ENCODE measurements at regions of chr13 and their contacts with region 1.

Region 1: GRCh38 chr13:106536244-106537034 is 977 bp upstream of the EFNB2 start:
- DNase-seq: peak; percentile 93
- H3K4me3 ChIP-seq: peak overlapping the region; percentile 37 to 89 (median 82)
- H3K27ac ChIP-seq: peak overlapping the region; percentile 82 to 93 (median 89)
- H3K4me1 ChIP-seq: peaks cover 0 to 27% (median 17%) of the 10 kb centered on the region in 4 donors
- H3K27me3 ChIP-seq: no peaks in the 10 kb centered on the region
- CTCF ChIP-seq: peak; percentile 66 to 93 (median 90)
- EP300 ChIP-seq: no peak
- POLR2A ChIP-seq: no peak

Region 2: DNA sequence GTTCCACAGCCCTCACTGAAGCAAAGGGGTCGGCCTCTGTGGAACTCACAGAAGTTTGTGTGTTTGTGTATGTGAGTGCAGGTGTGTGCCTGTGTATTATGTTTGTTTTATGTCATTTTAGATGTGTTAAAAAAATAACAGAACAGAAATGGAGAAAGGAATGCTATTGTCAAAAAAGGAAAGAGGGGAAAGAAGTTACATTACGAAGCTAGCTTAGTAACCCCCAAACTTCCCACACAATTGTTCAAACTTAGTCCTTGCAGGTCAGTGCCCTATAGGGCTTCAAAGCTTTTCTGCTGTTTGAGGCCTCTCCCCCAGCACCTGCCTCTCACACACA is 1964.6 kb before region 1 on chr13:
- intact Hi-C with region 1: loop called (anchors 2 kb)
- DNase-seq: no peak
- H3K4me3 ChIP-seq: no peak overlapping the region
- H3K27ac ChIP-seq: peak overlapping the region in 3 of 4 donors; percentile 27 to 68 (median 64)
- H3K4me1 ChIP-seq: peaks cover 0 to 26% (median 15%) of the 10 kb centered on the region in 4 donors
- H3K27me3 ChIP-seq: no peaks in the 10 kb centered on the region
- CTCF ChIP-seq: no peak
- EP300 ChIP-seq: no peak
- POLR2A ChIP-seq: no peak

Region 3: DNA sequence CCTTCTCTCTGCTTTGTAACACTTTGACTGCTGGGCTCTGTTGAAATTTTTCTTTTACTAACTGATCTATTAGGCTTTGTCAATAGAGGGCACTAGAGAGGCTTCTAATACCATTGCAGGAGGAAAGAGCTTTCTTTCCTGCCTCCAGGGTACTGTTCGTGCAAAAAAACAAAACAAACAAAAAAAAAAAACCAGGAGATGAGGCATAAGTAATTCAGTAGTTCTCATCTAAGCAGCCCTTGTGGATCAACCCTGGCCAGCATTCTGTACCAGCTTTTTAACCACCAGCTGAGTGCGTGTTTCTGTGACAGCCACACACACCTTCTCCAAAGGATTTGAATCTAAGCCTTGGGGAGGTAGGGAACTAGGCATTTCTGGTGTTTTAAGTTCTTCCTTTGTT is 1762.7 kb before region 1 on chr13:
- intact Hi-C with region 1: loop called (anchors 5 kb)
- DNase-seq: no peak
- H3K4me3 ChIP-seq: no peak overlapping the region
- H3K27ac ChIP-seq: no peak overlapping the region
- H3K4me1 ChIP-seq: no peaks in the 10 kb centered on the region
- H3K27me3 ChIP-seq: no peaks in the 10 kb centered on the region
- CTCF ChIP-seq: peak in 2 of 4 experiments; percentile 22 to 44
- EP300 ChIP-seq: no peak
- POLR2A ChIP-seq: no peak

Region 4: GRCh38 chr13:105442941-105443340 is 1093.5 kb before region 1 on chr13:
- intact Hi-C with region 1: loop called (anchors 10 kb)
- DNase-seq: no peak
- H3K4me3 ChIP-seq: no peak overlapping the region
- H3K27ac ChIP-seq: peak overlapping the region in 3 of 4 donors; percentile 65 to 69 (median 66)
- H3K4me1 ChIP-seq: peaks cover 0 to 39% (median 27%) of the 10 kb centered on the region in 4 donors
- H3K27me3 ChIP-seq: no peaks in the 10 kb centered on the region
- CTCF ChIP-seq: no peak
- EP300 ChIP-seq: peak in 1 of 4 donors; percentile 70
- POLR2A ChIP-seq: no peak

Region 5: GRCh38 chr13:106083620-106084350 is 452.7 kb before region 1 on chr13:
- intact Hi-C with region 1: loop called (anchors 5 kb)
- DNase-seq: no peak
- H3K4me3 ChIP-seq: no peak overlapping the region
- H3K27ac ChIP-seq: no peak overlapping the region
- H3K4me1 ChIP-seq: no peaks in the 10 kb centered on the region
- H3K27me3 ChIP-seq: no peaks in the 10 kb centered on the region
- CTCF ChIP-seq: peak; percentile 8 to 62 (median 37)
- EP300 ChIP-seq: no peak
- POLR2A ChIP-seq: no peak

Region 6: DNA sequence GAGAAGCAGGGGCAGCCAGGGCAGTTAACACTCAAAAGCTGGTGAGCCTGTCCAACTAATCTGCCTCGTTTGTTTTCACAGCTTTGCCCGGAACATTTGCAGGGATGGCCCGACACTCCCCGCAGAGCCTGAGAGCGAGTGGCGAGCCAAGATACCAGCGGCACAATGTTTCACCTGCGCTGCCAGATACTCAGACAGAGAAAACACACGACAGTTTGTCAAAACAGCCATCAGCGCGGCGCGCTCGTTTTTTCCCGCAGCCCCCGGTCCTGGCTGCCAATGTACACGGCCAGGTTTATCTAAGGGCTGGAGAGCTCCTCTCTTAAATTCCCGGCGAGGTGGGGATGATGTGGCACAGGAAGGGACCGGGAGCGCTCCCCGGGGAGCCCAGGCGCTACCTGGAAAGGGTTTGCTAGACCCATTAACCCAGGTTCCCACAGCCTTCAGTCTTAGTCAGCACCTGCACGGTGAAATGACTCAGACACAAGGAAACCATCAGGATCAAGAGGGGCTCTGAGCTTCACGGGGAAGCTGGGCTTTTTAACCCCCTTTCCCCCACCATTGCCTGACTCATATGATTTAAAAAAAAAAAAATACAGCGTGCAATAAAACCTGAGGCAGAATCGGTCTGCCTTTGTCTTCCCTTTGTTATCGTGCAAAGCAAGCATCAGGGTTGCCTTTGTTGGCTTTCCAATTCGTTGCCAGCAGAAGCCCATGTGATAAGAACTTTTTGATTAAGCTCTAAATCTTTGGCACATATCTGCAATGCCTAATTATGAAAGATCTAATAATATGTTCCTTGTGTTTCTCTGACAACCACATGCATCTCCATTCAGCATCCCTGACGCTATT is 187.1 kb before region 1 on chr13:
- intact Hi-C with region 1: loop called (anchors 10 kb)
- DNase-seq: no peak
- H3K4me3 ChIP-seq: peak overlapping the region in 3 of 4 donors; percentile 25 to 46 (median 41)
- H3K27ac ChIP-seq: peak overlapping the region in 2 of 4 donors; percentile 31 to 40
- H3K4me1 ChIP-seq: peaks cover 0 to 25% (median 12%) of the 10 kb centered on the region in 4 donors
- H3K27me3 ChIP-seq: no peaks in the 10 kb centered on the region
- CTCF ChIP-seq: no peak
- EP300 ChIP-seq: no peak
- POLR2A ChIP-seq: no peak

Region 7: DNA sequence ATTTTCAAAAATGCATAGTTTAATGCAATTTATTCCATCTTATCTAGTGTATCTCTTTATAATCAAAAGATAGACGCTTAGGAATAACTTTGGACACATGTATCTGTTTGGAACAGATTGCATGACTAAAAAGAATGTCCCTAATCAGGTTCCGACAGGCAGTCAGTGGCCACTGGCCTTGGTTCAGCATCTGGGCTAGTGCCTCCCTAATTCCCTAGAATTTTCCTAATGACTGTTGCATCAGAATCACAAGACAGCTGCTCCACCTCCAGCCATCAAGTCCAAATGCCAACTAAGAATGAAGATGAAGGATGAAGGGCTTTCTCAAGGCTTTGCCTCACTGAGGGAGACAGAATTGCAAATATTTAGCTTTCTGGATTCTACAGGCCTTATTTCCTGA is 174.8 kb before region 1 on chr13:
- intact Hi-C with region 1: no loop called
- DNase-seq: no peak
- H3K4me3 ChIP-seq: no peak overlapping the region
- H3K27ac ChIP-seq: no peak overlapping the region
- H3K4me1 ChIP-seq: peaks cover 0 to 7% (median 3%) of the 10 kb centered on the region in 4 donors
- H3K27me3 ChIP-seq: no peaks in the 10 kb centered on the region
- CTCF ChIP-seq: no peak
- EP300 ChIP-seq: no peak
- POLR2A ChIP-seq: no peak

Region 8: GRCh38 chr13:106565127-106565775 is 28.8 kb after region 1 on chr13:
- intact Hi-C with region 1: loop called (anchors 2 kb)
- DNase-seq: no peak
- H3K4me3 ChIP-seq: peak overlapping the region in 2 of 4 donors; percentile 68 to 93
- H3K27ac ChIP-seq: peak overlapping the region in 2 of 4 donors; percentile 28 to 99
- H3K4me1 ChIP-seq: peaks cover 0 to 64% (median 61%) of the 10 kb centered on the region in 4 donors
- H3K27me3 ChIP-seq: no peaks in the 10 kb centered on the region
- CTCF ChIP-seq: no peak
- EP300 ChIP-seq: no peak
- POLR2A ChIP-seq: no peak

Measured in sigmoid colon (tissue), 7 donors.